BJ (cell line): ENCODE measurements at regions of chr19 and their contacts with region 1.

Region 1: DNA sequence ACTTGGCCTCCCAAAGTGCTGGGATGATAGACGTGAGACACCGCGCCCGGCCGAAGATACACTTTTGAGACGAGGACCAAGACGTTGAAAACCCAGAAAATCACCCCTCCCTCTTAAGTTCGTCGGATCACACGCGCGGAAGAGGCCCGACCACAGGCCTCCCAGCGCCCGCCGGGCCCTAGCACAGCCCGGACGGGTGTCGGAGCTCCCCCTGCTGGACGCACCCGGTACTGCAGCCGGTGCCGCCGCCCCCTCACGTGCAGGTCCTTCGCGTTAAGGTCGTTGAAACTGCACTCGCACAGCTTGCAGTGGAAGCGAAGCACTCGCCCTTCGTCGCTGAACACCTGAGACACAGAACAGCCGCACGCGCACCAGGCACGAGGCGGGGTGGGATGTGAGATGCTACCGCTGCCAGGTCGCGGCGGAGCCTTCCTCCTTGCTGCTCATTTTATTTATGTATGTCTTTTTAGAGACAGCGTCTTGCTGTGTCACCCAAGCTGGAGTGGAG is 35.7 kb upstream of the MATK start:
- DNase-seq: no peak
- H3K4me3 ChIP-seq: no peak overlapping the region
- H3K27me3 ChIP-seq: no peaks in the 10 kb centered on the region
- CTCF ChIP-seq: peak; percentile 96

Region 2: DNA sequence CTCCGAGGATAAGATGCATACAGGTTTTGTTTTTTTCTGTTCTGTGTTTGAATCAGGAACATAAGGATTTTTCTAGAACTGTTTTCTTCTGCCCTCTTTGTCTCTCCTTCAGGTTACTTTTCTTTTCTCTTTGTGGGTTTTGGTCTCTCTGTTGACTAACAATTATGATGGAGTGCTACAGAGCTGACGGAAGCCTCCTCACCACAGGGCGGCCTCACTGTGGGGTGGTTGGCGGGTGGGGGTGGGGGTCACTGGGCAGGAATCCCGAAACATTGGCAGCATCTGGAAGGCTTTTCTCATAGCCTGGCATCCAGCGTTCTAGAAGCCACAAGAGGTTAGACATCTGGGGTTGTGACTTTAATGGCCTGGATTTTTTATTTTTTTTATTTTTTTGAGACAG is 23.8 kb before region 1 on chr19:
- CTCF ChIA-PET with region 1: interaction called, 15 read pairs
- POLR2A ChIA-PET with region 1: no interaction called
- DNase-seq: no peak
- H3K4me3 ChIP-seq: no peak overlapping the region
- H3K27me3 ChIP-seq: peaks cover 16% of the 10 kb centered on the region
- CTCF ChIP-seq: no peak

Region 3: DNA sequence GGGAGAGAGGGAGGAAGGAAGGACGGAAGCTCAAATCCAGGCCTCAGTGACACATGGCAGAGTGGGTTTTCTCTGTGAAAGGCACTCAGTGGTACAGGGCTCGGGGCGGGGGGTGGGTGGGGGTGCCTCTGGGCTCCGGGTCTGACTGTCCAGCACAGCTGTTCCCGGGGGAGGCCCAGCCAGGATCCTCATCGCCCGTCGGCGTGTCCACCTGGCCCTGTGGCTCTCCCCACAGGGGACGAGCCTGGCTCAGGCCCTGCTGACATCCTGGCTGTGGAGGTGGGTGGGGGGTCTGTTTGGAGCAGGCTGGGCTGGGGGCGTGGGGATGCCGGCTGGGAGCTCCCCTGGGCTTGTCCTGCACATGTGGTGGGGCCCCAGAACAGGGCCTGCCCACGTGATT is 17.5 kb before region 1 on chr19:
- CTCF ChIA-PET with region 1: interaction called, 14 read pairs
- POLR2A ChIA-PET with region 1: no interaction called
- DNase-seq: no peak
- H3K4me3 ChIP-seq: no peak overlapping the region
- H3K27me3 ChIP-seq: peaks cover 16% of the 10 kb centered on the region
- CTCF ChIP-seq: no peak

Region 4: DNA sequence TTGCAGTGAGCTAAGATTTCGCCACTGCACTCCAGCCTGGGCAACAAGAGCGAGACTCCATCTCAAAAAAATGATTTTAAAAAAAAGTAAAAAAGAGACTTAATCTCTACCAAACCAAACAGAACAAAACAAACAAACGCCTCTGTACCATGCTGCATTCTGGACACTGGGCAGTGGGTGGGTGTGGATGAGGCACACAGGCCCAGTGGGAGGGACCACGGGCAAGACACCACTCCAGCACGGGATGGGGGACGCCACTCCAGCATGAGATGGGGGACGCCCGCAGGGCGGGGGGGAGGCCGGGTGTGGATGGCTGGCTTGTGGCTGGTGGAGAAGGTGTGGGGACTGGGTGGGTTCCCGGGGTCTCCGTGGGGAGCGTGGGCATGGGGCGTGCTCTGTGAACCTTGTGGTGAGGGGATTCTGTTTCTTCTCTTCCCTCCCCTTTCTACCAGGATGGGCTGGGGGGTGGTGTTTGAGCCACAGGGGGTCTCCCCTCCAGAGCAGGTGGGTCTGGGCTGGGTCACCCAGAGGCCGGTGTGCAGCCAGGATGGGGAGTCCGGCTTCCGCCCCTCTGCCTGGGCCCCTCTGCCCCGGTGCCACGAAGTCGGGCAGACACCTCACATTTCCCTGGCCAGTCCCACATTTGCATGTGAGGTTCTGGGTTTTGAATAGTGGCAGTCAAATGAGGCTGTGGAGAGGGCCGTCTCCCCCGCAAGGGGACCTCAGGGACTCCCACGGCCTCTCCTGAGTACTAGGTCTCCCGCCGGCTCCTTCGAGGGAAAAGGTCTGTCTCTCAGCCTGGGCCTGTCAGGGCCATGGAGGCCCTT is 11.8 kb before region 1 on chr19:
- CTCF ChIA-PET with region 1: interaction called, 23 read pairs
- POLR2A ChIA-PET with region 1: no interaction called
- DNase-seq: no peak
- H3K4me3 ChIP-seq: no peak overlapping the region
- H3K27me3 ChIP-seq: no peaks in the 10 kb centered on the region
- CTCF ChIP-seq: no peak

Region 5: DNA sequence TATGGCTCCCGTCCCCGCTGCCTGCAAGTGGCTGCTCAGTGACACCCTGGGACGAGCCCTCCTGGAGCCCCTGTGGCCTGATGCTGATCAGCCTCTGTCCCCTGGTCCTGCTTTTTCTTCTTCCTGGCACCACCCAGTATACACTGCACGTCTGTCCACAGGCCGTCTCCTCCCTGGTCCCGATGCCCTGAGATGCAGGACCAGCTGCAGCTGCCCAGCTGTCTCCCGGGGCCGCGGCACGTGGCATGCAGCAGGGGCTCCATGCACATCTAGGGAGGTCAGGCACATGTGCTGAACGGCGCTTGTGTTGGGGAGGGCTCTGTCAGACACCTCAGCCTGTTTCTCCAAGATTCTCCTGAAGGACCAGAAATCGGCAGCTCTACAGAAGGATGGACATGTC is 16.8 kb after region 1 on chr19:
- CTCF ChIA-PET with region 1: interaction called, 21 read pairs
- POLR2A ChIA-PET with region 1: no interaction called
- DNase-seq: no peak
- H3K4me3 ChIP-seq: no peak overlapping the region
- H3K27me3 ChIP-seq: peaks cover 8% of the 10 kb centered on the region
- CTCF ChIP-seq: no peak

Region 6: GRCh38 chr19:3942790-3943409 is 121.0 kb after region 1 on chr19:
- CTCF ChIA-PET with region 1: no interaction called
- POLR2A ChIA-PET with region 1: no interaction called
- DNase-seq: no peak
- H3K4me3 ChIP-seq: no peak overlapping the region
- H3K27me3 ChIP-seq: no peaks in the 10 kb centered on the region
- CTCF ChIP-seq: no peak